ENCODE measurements at regions of chr17 and their contacts with region 1.

Region 1: GRCh38 chr17:43760254-43760852 is 1.8 kb upstream of the SOST start:
- DNase-seq: peak; percentile 96
- H3K4me3 ChIP-seq: no peak overlapping the region
- H3K27ac ChIP-seq: peak overlapping the region in 2 of 4 donors; percentile 34 to 38
- H3K4me1 ChIP-seq: peaks cover 0 to 10% (median 6%) of the 10 kb centered on the region in 4 donors
- H3K27me3 ChIP-seq: peaks cover 33% of the 10 kb centered on the region
- CTCF ChIP-seq: peak; percentile 95 to 99 (median 97)
- EP300 ChIP-seq: no peak
- POLR2A ChIP-seq: no peak

Region 2: DNA sequence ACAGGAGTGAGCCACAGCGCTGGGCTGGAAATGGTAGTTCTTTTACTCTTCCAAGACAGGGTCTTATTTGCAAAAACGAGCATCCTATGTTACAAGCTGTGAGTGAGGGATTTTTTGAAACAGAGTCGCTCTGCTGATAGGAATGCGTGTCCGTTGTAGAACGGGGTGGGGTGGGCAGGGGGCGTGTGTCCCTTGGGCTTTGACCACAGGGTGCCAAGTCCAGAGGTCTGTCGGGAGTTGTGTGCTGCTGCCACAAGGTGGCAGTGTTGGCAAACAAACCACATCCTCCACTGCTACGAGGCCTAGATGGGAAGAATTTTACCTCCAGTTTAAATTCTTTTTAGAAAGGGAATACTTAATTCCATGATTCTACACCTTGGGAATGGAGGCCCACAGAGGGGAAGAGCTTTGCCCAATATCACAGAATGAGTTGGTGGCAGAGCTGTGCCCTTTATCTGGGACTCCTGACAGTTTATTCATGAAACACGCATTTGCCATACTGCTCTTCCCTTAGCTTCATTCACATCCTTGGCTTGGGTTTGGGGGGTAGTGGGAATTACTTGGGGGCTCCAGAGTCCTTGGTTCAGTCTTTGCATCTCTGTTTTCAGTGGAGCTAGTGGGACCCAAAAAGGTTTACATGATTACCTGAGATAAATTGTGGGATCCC is 183.7 kb before region 1 on chr17:
- in situ Hi-C with region 1: loop called in 2 of 4 experiments (anchors 10 kb)
- intact Hi-C with region 1: loop called (anchors 10 kb)
- DNase-seq: peak; percentile 75
- H3K4me3 ChIP-seq: no peak overlapping the region
- H3K27ac ChIP-seq: no peak overlapping the region
- H3K4me1 ChIP-seq: peaks cover 4 to 36% (median 21%) of the 10 kb centered on the region in 4 donors
- H3K27me3 ChIP-seq: no peaks in the 10 kb centered on the region
- CTCF ChIP-seq: peak; percentile 90 to 93 (median 92)
- EP300 ChIP-seq: no peak
- POLR2A ChIP-seq: no peak

Region 3: GRCh38 chr17:43694077-43694870 is 66.1 kb before region 1 on chr17:
- in situ Hi-C with region 1: loop called in 2 of 4 experiments (anchors 5 kb)
- intact Hi-C with region 1: loop called (anchors 2 kb)
- DNase-seq: peak; percentile 78
- H3K4me3 ChIP-seq: no peak overlapping the region
- H3K27ac ChIP-seq: no peak overlapping the region
- H3K4me1 ChIP-seq: peaks cover 0 to 8% (median 2%) of the 10 kb centered on the region in 4 donors
- H3K27me3 ChIP-seq: peaks cover 6% of the 10 kb centered on the region
- CTCF ChIP-seq: peak; percentile 90 to 96 (median 92)
- EP300 ChIP-seq: no peak
- POLR2A ChIP-seq: no peak

Region 4: DNA sequence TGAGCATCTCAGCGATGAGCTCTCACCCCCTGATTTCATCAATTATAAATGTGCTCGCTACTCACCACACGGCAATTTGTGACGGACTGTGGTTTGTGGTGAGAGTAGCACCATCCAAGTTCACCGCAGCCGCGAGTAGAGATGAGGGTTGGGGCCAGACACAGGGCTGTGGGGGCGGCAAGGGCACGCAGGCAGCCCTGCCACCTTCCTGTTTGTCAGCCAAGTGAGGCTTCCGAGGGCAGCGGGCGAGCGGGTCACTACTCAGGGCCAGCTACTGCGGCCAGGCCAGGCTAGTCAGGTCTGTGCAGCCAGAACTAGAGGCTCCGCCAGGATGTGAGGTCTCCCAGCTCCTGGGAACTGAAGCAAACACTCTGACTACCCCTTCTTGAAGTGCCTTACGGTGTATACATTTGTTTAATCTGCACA is 59.0 kb before region 1 on chr17:
- in situ Hi-C with region 1: loop called in 3 of 4 experiments (anchors 5 to 10 kb)
- intact Hi-C with region 1: no loop called
- DNase-seq: peak; percentile 20
- H3K4me3 ChIP-seq: no peak overlapping the region
- H3K27ac ChIP-seq: no peak overlapping the region
- H3K4me1 ChIP-seq: peaks cover 0 to 5% (median 2%) of the 10 kb centered on the region in 4 donors
- H3K27me3 ChIP-seq: peaks cover 9% of the 10 kb centered on the region
- CTCF ChIP-seq: no peak
- EP300 ChIP-seq: no peak
- POLR2A ChIP-seq: no peak

Region 5: GRCh38 chr17:43871951-43872695 is 111.8 kb after region 1 on chr17:
- in situ Hi-C with region 1: no loop called
- intact Hi-C with region 1: no loop called
- DNase-seq: peak; percentile 82
- H3K4me3 ChIP-seq: peak overlapping the region in 3 of 4 donors; percentile 1 to 40 (median 13)
- H3K27ac ChIP-seq: peak overlapping the region; percentile 66 to 85 (median 75)
- H3K4me1 ChIP-seq: peaks cover 3 to 31% (median 21%) of the 10 kb centered on the region in 4 donors
- H3K27me3 ChIP-seq: peaks cover 1% of the 10 kb centered on the region
- CTCF ChIP-seq: no peak
- EP300 ChIP-seq: no peak
- POLR2A ChIP-seq: peak; percentile 18

Measured in transverse colon (tissue), 4 donors.